ENCODE measurements at regions of chr4 and their contacts with region 1.

Region 1: GRCh38 chr4:124596816-124597215 is 115.7 kb downstream of the ANKRD50 start:
- DNase-seq: no peak
- H3K4me3 ChIP-seq: no peak overlapping the region
- H3K27ac ChIP-seq: no peak overlapping the region
- H3K4me1 ChIP-seq: no peaks in the 10 kb centered on the region
- H3K27me3 ChIP-seq: no peaks in the 10 kb centered on the region
- CTCF ChIP-seq: no peak
- EP300 ChIP-seq: no peak
- POLR2A ChIP-seq: no peak

Region 2: GRCh38 chr4:123819362-123820035 is 777.3 kb before region 1 on chr4:
- intact Hi-C with region 1: loop called in 1 of 4 experiments (anchors 5 kb)
- DNase-seq: no peak
- H3K4me3 ChIP-seq: no peak overlapping the region
- H3K27ac ChIP-seq: no peak overlapping the region
- H3K4me1 ChIP-seq: no peaks in the 10 kb centered on the region
- H3K27me3 ChIP-seq: no peaks in the 10 kb centered on the region
- CTCF ChIP-seq: no peak
- EP300 ChIP-seq: no peak
- POLR2A ChIP-seq: no peak

Region 3: GRCh38 chr4:125891597-125892258 is 1294.9 kb after region 1 on chr4:
- intact Hi-C with region 1: no loop called
- DNase-seq: no peak
- H3K4me3 ChIP-seq: no peak overlapping the region
- H3K27ac ChIP-seq: no peak overlapping the region
- H3K4me1 ChIP-seq: no peaks in the 10 kb centered on the region
- H3K27me3 ChIP-seq: no peaks in the 10 kb centered on the region
- CTCF ChIP-seq: no peak
- EP300 ChIP-seq: no peak
- POLR2A ChIP-seq: no peak